ENCODE measurements at regions of chr10 and their contacts with region 1.

Region 1: DNA sequence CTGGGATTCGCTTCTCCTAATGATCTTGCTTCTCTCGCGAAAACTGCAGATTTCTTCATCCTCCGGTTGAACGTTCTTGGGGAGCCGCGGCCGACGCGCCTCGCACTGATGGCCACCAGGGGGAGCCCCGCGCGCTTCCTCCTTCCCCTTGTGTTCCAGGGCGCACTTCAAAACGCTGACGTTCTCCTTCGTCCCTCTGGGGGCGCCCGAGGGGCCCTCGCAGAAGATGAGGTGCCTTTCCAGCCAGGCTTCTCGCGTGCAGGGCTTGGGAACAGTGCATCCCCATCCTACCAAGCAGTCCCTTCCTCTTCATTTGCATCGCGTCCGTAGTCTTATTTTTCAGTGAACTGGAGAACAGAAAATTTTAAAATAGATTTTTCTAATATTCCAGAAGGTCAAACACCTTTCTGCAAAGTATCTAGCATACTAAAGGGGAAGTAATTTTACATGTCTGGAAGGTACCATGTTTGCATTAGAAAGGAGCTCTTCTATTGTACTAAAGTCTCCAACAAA is 22.5 kb downstream of the GSTO2 start:
- DNase-seq: peak; percentile 84 to 93 (median 91)
- H3K4me3 ChIP-seq: peak overlapping the region in 1 of 7 experiments; percentile 55
- H3K27ac ChIP-seq: no peak overlapping the region
- H3K4me1 ChIP-seq: peaks cover 0 to 17% (median 8%) of the 10 kb centered on the region in 4 experiments
- H3K27me3 ChIP-seq: no peaks in the 10 kb centered on the region

Region 2: GRCh38 chr10:104016661-104017060 is 274.8 kb before region 1 on chr10:
- CTCF ChIA-PET with region 1: no interaction called
- POLR2A ChIA-PET with region 1: no interaction called
- DNase-seq: no peak
- H3K4me3 ChIP-seq: no peak overlapping the region
- H3K27ac ChIP-seq: no peak overlapping the region
- H3K4me1 ChIP-seq: no peaks in the 10 kb centered on the region
- H3K27me3 ChIP-seq: no peaks in the 10 kb centered on the region

Region 3: DNA sequence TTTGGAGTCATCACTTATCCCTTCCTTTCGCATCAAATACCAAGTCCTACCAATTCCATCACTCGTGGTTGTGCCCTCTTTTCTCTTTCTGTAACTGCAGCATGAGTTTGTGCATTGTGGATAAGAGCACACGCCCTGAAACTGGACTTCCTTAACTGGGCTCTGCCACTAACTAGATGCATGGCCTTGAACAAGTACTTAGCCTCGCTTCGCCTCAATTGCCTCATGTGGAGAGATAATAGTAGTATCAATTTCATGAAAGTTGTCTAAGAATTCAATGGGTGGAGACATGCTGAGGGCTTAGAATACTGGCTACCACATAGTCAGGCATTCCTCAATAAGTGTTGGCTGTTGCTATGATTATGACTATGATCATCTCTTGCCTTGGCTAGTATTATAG is 100.8 kb before region 1 on chr10:
- CTCF ChIA-PET with region 1: no interaction called
- POLR2A ChIA-PET with region 1: no interaction called
- DNase-seq: no peak
- H3K4me3 ChIP-seq: no peak overlapping the region
- H3K27ac ChIP-seq: no peak overlapping the region
- H3K4me1 ChIP-seq: no peaks in the 10 kb centered on the region
- H3K27me3 ChIP-seq: no peaks in the 10 kb centered on the region

Region 4: DNA sequence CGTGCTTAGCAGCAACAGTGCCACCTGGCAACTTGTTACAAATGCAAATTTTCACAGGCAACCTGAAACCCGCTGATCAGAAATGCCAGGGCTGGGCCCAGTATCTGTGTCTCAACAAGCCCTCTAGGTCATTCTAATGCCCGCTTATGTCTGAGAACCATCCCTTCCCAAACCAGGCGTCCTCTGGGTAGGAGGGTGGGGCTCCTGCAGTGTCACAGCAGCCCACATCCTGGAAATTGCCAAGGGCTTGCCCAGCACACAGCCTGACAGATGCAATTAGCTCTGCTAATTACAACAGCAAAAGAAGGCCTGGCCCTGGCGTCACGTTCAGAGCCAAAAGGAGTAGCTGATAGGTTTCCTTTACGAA is 30.9 kb after region 1 on chr10:
- CTCF ChIA-PET with region 1: interaction called, 75 read pairs
- POLR2A ChIA-PET with region 1: no interaction called
- DNase-seq: no peak
- H3K4me3 ChIP-seq: no peak overlapping the region
- H3K27ac ChIP-seq: no peak overlapping the region
- H3K4me1 ChIP-seq: peaks cover 14 to 88% (median 78%) of the 10 kb centered on the region in 4 experiments
- H3K27me3 ChIP-seq: no peaks in the 10 kb centered on the region

Region 5: GRCh38 chr10:104337974-104338735 is 46.7 kb after region 1 on chr10 and contains the start of gene ITPRIP:
- CTCF ChIA-PET with region 1: interaction called, 27 read pairs
- POLR2A ChIA-PET with region 1: no interaction called
- DNase-seq: peak; percentile 72 to 88 (median 81)
- H3K4me3 ChIP-seq: peak within 1 kb of the TSS; percentile 85 to 98 (median 91)
- H3K27ac ChIP-seq: peak within 1 kb of the TSS; percentile 86 to 96
- H3K4me1 ChIP-seq: peaks cover 21 to 47% (median 42%) of the 10 kb centered on the region in 4 experiments
- H3K27me3 ChIP-seq: no peaks in the 10 kb centered on the region

Region 6: GRCh38 chr10:104367904-104368303 is 76.4 kb after region 1 on chr10:
- CTCF ChIA-PET with region 1: no interaction called
- POLR2A ChIA-PET with region 1: no interaction called
- DNase-seq: no peak
- H3K4me3 ChIP-seq: no peak overlapping the region
- H3K27ac ChIP-seq: no peak overlapping the region
- H3K4me1 ChIP-seq: no peaks in the 10 kb centered on the region
- H3K27me3 ChIP-seq: peaks cover 0 to 5% (median 0%) of the 10 kb centered on the region in 5 experiments